ENCODE measurements at regions of chr5 and their contacts with region 1.

Region 1: DNA sequence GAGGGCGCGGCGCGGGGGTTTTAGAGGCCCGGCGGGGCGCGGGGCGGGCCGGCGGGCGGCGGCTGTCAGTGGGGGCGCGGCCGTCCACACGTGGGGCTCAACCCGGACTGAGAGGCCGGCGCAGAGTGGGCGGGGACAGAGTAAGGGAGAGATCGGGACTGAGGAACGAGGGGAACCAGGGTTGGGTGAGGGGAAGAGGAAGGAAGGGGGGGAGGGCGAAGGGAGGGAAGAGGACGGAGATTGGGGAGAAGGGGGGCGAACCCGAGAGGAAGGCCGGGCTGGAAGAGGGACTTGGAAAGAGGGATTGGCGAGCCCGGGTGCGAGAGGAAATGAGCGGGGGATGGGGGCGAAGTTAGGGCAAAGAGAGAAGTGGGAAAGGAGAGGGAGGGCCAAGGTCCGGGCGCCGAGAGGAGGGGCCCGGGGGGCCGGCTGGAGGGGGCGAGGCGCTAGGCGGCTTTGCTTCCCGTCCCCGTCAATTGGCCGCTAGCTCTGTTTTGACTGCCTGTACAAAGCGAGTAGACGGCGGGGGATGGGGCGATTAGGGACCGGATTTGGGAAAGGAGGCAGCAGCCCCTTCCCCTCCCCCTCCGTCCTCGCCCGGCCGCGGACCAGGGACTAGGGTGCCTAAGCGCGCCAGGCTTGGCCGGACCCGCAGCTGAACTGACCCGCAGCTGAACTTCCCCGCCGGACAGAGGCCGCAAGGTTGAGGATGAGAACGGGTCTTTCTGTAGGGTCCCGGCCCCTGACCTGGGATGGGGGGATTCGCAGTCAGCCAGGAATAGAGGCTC is 399 bp upstream of the FBN2 start:
- DNase-seq: peak; percentile 80
- ATAC-seq: peak; percentile 89
- H3K4me3 ChIP-seq: peak overlapping the region; percentile 81
- H3K27ac ChIP-seq: peak overlapping the region; percentile 81
- H3K4me1 ChIP-seq: peaks cover 6% of the 10 kb centered on the region
- H3K27me3 ChIP-seq: no peaks in the 10 kb centered on the region
- CTCF ChIP-seq: no peak
- POLR2A ChIP-seq: no peak
- RAD21 ChIP-seq: no peak

Region 2: GRCh38 chr5:128315671-128316070 is 222.8 kb before region 1 on chr5:
- CTCF ChIA-PET with region 1: no interaction called
- POLR2A ChIA-PET with region 1: no interaction called
- dilution Hi-C with region 1: no loop called
- in situ Hi-C with region 1: no loop called
- intact Hi-C with region 1: no loop called
- DNase-seq: no peak
- ATAC-seq: no peak
- H3K4me3 ChIP-seq: no peak overlapping the region
- H3K27ac ChIP-seq: no peak overlapping the region
- H3K4me1 ChIP-seq: no peaks in the 10 kb centered on the region
- H3K27me3 ChIP-seq: no peaks in the 10 kb centered on the region
- CTCF ChIP-seq: no peak
- POLR2A ChIP-seq: no peak
- RAD21 ChIP-seq: no peak

Region 3: DNA sequence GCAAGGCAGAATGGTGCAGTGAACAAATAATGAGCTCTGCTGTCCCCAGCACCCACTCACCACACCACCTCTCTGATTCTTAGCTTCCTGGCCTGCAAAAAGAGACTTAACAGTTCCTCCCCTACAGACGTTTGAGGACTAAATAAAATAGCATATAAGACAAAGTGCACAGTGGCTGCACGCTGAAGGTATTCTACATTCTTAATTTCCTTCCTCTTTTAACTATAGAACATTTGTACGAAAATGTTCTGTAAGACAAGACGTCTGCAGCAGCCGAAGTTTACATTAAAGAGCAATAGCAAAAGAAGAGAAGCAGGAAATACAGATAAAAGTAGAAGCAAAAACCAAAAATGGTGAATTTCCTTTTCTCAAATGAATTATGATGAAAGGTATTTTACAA is 16.1 kb before region 1 on chr5:
- CTCF ChIA-PET with region 1: no interaction called
- POLR2A ChIA-PET with region 1: no interaction called
- dilution Hi-C with region 1: no loop called
- in situ Hi-C with region 1: no loop called
- intact Hi-C with region 1: no loop called
- DNase-seq: no peak
- ATAC-seq: no peak; the same call in 1 of the 2 replicates
- H3K4me3 ChIP-seq: no peak overlapping the region
- H3K27ac ChIP-seq: no peak overlapping the region
- H3K4me1 ChIP-seq: no peaks in the 10 kb centered on the region; the same call in 1 of the 2 replicates
- H3K27me3 ChIP-seq: no peaks in the 10 kb centered on the region
- CTCF ChIP-seq: no peak
- POLR2A ChIP-seq: no peak
- RAD21 ChIP-seq: no peak

Region 4: GRCh38 chr5:128572051-128572929 is 33.8 kb after region 1 on chr5:
- CTCF ChIA-PET with region 1: interaction called, 3 read pairs
- POLR2A ChIA-PET with region 1: no interaction called
- dilution Hi-C with region 1: no loop called
- in situ Hi-C with region 1: no loop called
- intact Hi-C with region 1: loop called (anchors 2 kb)
- DNase-seq: peak; percentile 69
- ATAC-seq: peak; percentile 74
- H3K4me3 ChIP-seq: no peak overlapping the region
- H3K27ac ChIP-seq: peak overlapping the region; percentile 64; the same call in 1 of the 2 replicates
- H3K4me1 ChIP-seq: peaks cover 12% of the 10 kb centered on the region
- H3K27me3 ChIP-seq: no peaks in the 10 kb centered on the region
- CTCF ChIP-seq: no peak
- POLR2A ChIP-seq: no peak
- RAD21 ChIP-seq: no peak

Region 5: DNA sequence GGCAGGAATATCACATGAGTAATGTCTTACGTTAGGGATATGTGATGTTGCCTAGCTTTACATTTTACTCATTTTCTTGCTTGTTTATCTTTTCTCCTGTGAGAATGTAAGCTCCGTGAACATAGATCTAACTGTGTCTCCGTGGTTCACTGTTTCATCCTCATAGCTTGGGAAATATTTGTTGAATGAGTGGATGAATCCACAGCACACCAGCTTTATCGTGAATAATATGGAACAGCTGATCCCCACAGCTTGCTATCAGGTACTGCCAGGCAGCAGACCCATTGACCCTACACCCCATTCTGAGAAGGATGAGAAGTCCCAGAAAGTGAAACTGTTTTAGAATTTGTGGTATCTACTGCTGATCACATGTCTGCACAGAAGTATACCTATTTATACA is 106.4 kb after region 1 on chr5:
- CTCF ChIA-PET with region 1: no interaction called
- POLR2A ChIA-PET with region 1: no interaction called
- dilution Hi-C with region 1: no loop called
- in situ Hi-C with region 1: no loop called
- intact Hi-C with region 1: loop called (anchors 10 kb)
- DNase-seq: peak; percentile 96
- ATAC-seq: peak; percentile 84
- H3K4me3 ChIP-seq: no peak overlapping the region
- H3K27ac ChIP-seq: peak overlapping the region; percentile 57; the same call in 1 of the 2 replicates
- H3K4me1 ChIP-seq: peaks cover 2% of the 10 kb centered on the region; the same call in 1 of the 2 replicates
- H3K27me3 ChIP-seq: no peaks in the 10 kb centered on the region
- CTCF ChIP-seq: no peak
- POLR2A ChIP-seq: no peak
- RAD21 ChIP-seq: no peak

Region 6: GRCh38 chr5:128674825-128675446 is 136.5 kb after region 1 on chr5:
- CTCF ChIA-PET with region 1: interaction called, 7 read pairs
- POLR2A ChIA-PET with region 1: interaction called, 8 read pairs
- dilution Hi-C with region 1: no loop called
- in situ Hi-C with region 1: loop called (anchors 5 kb)
- intact Hi-C with region 1: loop called (anchors 1 kb)
- DNase-seq: peak; percentile 57
- ATAC-seq: peak; percentile 95
- H3K4me3 ChIP-seq: no peak overlapping the region
- H3K27ac ChIP-seq: no peak overlapping the region
- H3K4me1 ChIP-seq: no peaks in the 10 kb centered on the region; the same call in 1 of the 2 replicates
- H3K27me3 ChIP-seq: no peaks in the 10 kb centered on the region; the same call in 1 of the 2 replicates
- CTCF ChIP-seq: peak; percentile 83
- POLR2A ChIP-seq: no peak
- RAD21 ChIP-seq: peak; percentile 87

Region 7: GRCh38 chr5:128777052-128777451 is 238.6 kb after region 1 on chr5:
- CTCF ChIA-PET with region 1: no interaction called
- POLR2A ChIA-PET with region 1: no interaction called
- dilution Hi-C with region 1: no loop called
- in situ Hi-C with region 1: no loop called
- intact Hi-C with region 1: loop called (anchors 5 kb)
- DNase-seq: no peak
- ATAC-seq: no peak
- H3K4me3 ChIP-seq: no peak overlapping the region
- H3K27ac ChIP-seq: no peak overlapping the region
- H3K4me1 ChIP-seq: no peaks in the 10 kb centered on the region
- H3K27me3 ChIP-seq: peaks cover 4% of the 10 kb centered on the region; the same call in 1 of the 2 replicates
- CTCF ChIP-seq: no peak
- POLR2A ChIP-seq: no peak
- RAD21 ChIP-seq: no peak

Region 8: GRCh38 chr5:128825826-128826225 is 287.4 kb after region 1 on chr5:
- CTCF ChIA-PET with region 1: no interaction called
- POLR2A ChIA-PET with region 1: no interaction called
- dilution Hi-C with region 1: no loop called
- in situ Hi-C with region 1: no loop called
- intact Hi-C with region 1: loop called (anchors 5 kb)
- DNase-seq: peak; percentile 17
- ATAC-seq: no peak
- H3K4me3 ChIP-seq: no peak overlapping the region
- H3K27ac ChIP-seq: no peak overlapping the region
- H3K4me1 ChIP-seq: no peaks in the 10 kb centered on the region
- H3K27me3 ChIP-seq: no peaks in the 10 kb centered on the region
- CTCF ChIP-seq: no peak
- POLR2A ChIP-seq: no peak
- RAD21 ChIP-seq: no peak

Measured in IMR-90 (cell line).